Left cardiac atrium (tissue), 4 donors: ENCODE measurements at regions of chr11 and their contacts with region 1.

Region 1: GRCh38 chr11:127470306-127470884 is 469.8 kb upstream of the KIRREL3 start:
- DNase-seq: no peak
- ATAC-seq: no peak

Region 2: GRCh38 chr11:128021349-128022006 is 551.1 kb after region 1 on chr11:
- intact Hi-C with region 1: loop called in 1 of 2 experiments (anchors 10 kb)
- DNase-seq: no peak
- ATAC-seq: no peak